ENCODE measurements at regions of chr6 and their contacts with region 1.

Region 1: DNA sequence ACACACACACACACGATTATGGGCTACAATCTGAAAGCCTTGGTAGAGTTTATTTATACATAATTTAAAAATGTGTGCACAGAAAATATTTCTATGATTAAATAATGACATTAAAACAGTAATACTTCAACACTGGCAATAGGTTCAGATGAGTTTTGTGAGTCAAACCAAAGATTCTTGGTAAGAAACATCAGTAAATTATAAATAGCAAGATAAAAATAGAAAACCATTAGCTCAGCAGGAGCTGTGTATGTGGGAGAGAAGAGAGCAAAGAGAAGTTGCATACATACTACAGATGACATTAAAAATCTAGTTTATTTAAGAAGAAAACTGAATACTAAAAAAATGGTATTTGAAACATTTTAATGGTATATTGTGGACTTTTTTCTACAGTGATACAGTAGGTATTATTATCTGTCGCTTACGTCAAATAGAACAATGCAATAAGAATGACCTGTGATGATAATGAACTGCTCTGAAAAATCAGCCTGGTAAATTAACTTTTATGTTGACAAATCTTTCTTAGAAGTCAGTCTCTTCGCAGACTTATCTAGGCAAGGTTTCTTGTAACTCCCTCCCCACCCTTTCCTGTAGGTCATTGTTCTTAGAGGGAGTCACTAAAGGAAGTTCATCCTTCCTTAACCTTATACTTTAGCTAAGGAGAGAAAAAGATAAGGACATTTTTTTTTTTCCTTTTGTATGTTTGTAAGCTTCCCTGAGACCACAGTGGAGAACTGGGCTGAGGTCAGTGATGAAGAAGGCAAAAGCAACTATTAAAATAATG is 149.3 kb downstream of the GJA1 start:
- DNase-seq: no peak
- ATAC-seq: peak; percentile 53
- H3K4me3 ChIP-seq: no peak overlapping the region
- H3K27ac ChIP-seq: no peak overlapping the region
- H3K4me1 ChIP-seq: peaks cover 0 to 5% of the 10 kb centered on the region in 2 donors
- H3K27me3 ChIP-seq: no peaks in the 10 kb centered on the region

Region 2: GRCh38 chr6:121443971-121444541 is 140.7 kb before region 1 on chr6:
- intact Hi-C with region 1: loop called in 1 of 2 experiments (anchors 10 kb)
- DNase-seq: no peak
- ATAC-seq: no peak
- H3K4me3 ChIP-seq: peak overlapping the region in 1 of 2 donors; percentile 26
- H3K27ac ChIP-seq: peak overlapping the region in 1 of 2 donors; percentile 51
- H3K4me1 ChIP-seq: peaks cover 2 to 6% of the 10 kb centered on the region in 2 donors
- H3K27me3 ChIP-seq: no peaks in the 10 kb centered on the region

Region 3: DNA sequence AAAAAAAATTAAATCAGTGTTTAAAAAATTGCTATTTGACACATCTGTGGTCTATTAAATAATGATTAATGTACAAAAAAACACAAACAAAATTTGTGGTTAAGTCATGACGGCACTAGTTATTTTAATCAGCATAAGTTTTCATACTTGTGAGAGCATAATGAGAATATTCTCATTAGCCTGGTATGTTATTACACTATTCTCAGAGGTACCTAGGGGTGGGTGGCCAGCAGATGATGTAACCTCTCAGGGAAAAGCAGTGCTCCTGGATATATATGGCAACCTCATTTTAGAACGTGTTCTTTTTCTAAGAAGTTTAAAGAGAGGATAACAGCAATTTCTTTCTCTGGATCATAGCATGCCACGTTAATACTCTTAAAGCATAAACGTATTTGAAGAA is 40.1 kb before region 1 on chr6:
- intact Hi-C with region 1: loop called (anchors 5 kb)
- DNase-seq: no peak
- ATAC-seq: no peak
- H3K4me3 ChIP-seq: no peak overlapping the region
- H3K27ac ChIP-seq: no peak overlapping the region
- H3K4me1 ChIP-seq: peaks cover 0 to 2% of the 10 kb centered on the region in 2 donors
- H3K27me3 ChIP-seq: no peaks in the 10 kb centered on the region

Region 4: GRCh38 chr6:122014961-122015360 is 430.2 kb after region 1 on chr6:
- intact Hi-C with region 1: no loop called
- DNase-seq: no peak
- ATAC-seq: no peak
- H3K4me3 ChIP-seq: no peak overlapping the region
- H3K27ac ChIP-seq: no peak overlapping the region
- H3K4me1 ChIP-seq: no peaks in the 10 kb centered on the region
- H3K27me3 ChIP-seq: no peaks in the 10 kb centered on the region

Measured in aorta (tissue), 5 donors.